ENCODE measurements at regions of chr6 and their contacts with region 1.

Region 1: GRCh38 chr6:132820629-132821381 is 6.4 kb downstream of the RPS12 start:
- DNase-seq: no peak
- H3K4me3 ChIP-seq: no peak overlapping the region
- H3K27ac ChIP-seq: peak overlapping the region; percentile 89
- H3K4me1 ChIP-seq: peaks cover 31% of the 10 kb centered on the region
- H3K27me3 ChIP-seq: no peaks in the 10 kb centered on the region
- CTCF ChIP-seq: no peak

Region 2: GRCh38 chr6:132633362-132633761 is 187.4 kb before region 1 on chr6:
- CTCF ChIA-PET with region 1: no interaction called
- POLR2A ChIA-PET with region 1: interaction called, 10 read pairs
- intact Hi-C with region 1: no loop called
- DNase-seq: no peak
- H3K4me3 ChIP-seq: no peak overlapping the region
- H3K27ac ChIP-seq: no peak overlapping the region
- H3K4me1 ChIP-seq: no peaks in the 10 kb centered on the region
- H3K27me3 ChIP-seq: no peaks in the 10 kb centered on the region
- CTCF ChIP-seq: no peak

Region 3: GRCh38 chr6:132780770-132781371 is 39.9 kb before region 1 on chr6:
- CTCF ChIA-PET with region 1: no interaction called
- POLR2A ChIA-PET with region 1: interaction called, 30 read pairs
- intact Hi-C with region 1: no loop called
- DNase-seq: no peak
- H3K4me3 ChIP-seq: no peak overlapping the region
- H3K27ac ChIP-seq: no peak overlapping the region
- H3K4me1 ChIP-seq: no peaks in the 10 kb centered on the region
- H3K27me3 ChIP-seq: no peaks in the 10 kb centered on the region
- CTCF ChIP-seq: peak; percentile 73

Region 4: DNA sequence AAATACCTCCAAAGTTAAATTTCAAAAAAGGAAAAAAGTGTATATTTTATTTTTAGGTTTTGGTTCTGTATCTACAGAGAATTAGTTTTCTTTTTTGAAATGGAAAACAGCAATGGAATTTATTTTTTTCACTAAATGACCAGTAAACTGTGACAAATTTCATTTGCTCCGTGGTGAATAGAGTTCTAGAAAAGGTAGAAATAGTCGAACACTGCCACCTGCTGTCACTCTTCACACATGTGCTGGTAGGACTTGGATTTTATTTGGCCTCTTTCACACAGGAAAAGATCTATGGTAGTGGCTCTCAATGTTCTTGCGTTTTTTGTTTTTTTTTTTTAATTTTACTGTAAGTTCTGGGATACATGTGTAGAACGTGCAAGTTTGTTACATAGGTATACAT is 732.8 kb after region 1 on chr6:
- CTCF ChIA-PET with region 1: interaction called, 6 read pairs
- POLR2A ChIA-PET with region 1: no interaction called
- intact Hi-C with region 1: loop called (anchors 1 kb)
- DNase-seq: peak in 1 of 2 experiments; percentile 38
- H3K4me3 ChIP-seq: no peak overlapping the region
- H3K27ac ChIP-seq: no peak overlapping the region
- H3K4me1 ChIP-seq: no peaks in the 10 kb centered on the region
- H3K27me3 ChIP-seq: no peaks in the 10 kb centered on the region
- CTCF ChIP-seq: peak; percentile 89

Region 5: GRCh38 chr6:134097114-134097707 is 1276.4 kb after region 1 on chr6:
- CTCF ChIA-PET with region 1: no interaction called
- POLR2A ChIA-PET with region 1: interaction called, 4 read pairs
- intact Hi-C with region 1: loop called (anchors 5 kb)
- DNase-seq: peak; percentile 48 to 59
- H3K4me3 ChIP-seq: no peak overlapping the region
- H3K27ac ChIP-seq: no peak overlapping the region
- H3K4me1 ChIP-seq: peaks cover 11% of the 10 kb centered on the region; the same call in 1 of the 2 replicates
- H3K27me3 ChIP-seq: no peaks in the 10 kb centered on the region
- CTCF ChIP-seq: peak; percentile 97